Activated CD4-positive, alpha-beta T cell treated with anti-CD3 and anti-CD28 coated beads, Interleukin-2, amount 10 ng/mL, durations not matched to agents 7 days and 5 days (primary cell): ENCODE measurements at regions of chr11 and their contacts with region 1.

Region 1: GRCh38 chr11:124070915-124071635 is 29.9 kb upstream of the OR10G7 start:
- DNase-seq: peak; percentile 73
- H3K4me3 Mint-ChIP-seq: no peak overlapping the region
- H3K27ac Mint-ChIP-seq: no peak overlapping the region
- H3K4me1 Mint-ChIP-seq: peaks cover 11% of the 10 kb centered on the region
- H3K27me3 Mint-ChIP-seq: peaks cover 29% of the 10 kb centered on the region

Region 2: GRCh38 chr11:124194698-124195410 is 123.8 kb after region 1 on chr11:
- CTCF ChIA-PET with region 1: interaction called, 11 read pairs
- POLR2A ChIA-PET with region 1: no interaction called
- DNase-seq: peak; percentile 64
- H3K4me3 Mint-ChIP-seq: no peak overlapping the region
- H3K27ac Mint-ChIP-seq: no peak overlapping the region
- H3K4me1 Mint-ChIP-seq: no peaks in the 10 kb centered on the region
- H3K27me3 Mint-ChIP-seq: peaks cover 10% of the 10 kb centered on the region